ENCODE measurements at regions of chr2 and their contacts with region 1.

Region 1: DNA sequence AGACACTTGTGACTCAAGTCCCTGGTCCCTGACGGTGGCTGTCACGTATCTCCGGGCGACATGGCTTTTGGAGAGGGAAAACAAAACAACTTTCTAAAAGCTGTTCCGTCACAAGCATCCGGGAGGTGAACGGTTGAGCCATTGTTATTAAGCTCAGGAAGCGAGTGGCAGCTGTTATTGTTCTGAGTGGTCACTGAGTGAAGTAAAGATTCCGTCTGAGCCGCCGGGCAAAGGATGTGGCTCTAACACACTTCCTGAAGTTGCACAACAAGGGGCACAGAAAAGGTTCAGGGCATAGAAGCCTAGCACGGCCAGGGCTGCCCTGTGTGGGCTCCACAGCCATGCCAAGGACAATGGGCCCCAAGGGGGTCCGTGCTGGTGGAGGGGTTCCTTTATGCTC is 24.3 kb downstream of the INPP5D start:
- DNase-seq: no peak
- CTCF ChIP-seq: no peak

Region 2: GRCh38 chr2:233100192-233100998 is 15.9 kb after region 1 on chr2:
- CTCF ChIA-PET with region 1: interaction called, 51 read pairs
- POLR2A ChIA-PET with region 1: interaction called, 7 read pairs
- DNase-seq: peak; percentile 74
- CTCF ChIP-seq: no peak

Measured in GM10248 (cell line).